T-cell (primary cell): ENCODE measurements at regions of chr21 and their contacts with region 1.

Region 1: GRCh38 chr21:29018540-29018939 is 609 bp downstream of the RWDD2B start:
- DNase-seq: no peak
- ATAC-seq: peak in 2 of 4 experiments; percentile 10 to 13
- H3K4me3 ChIP-seq: peak overlapping the region; percentile 87
- H3K4me3 Mint-ChIP-seq: peak overlapping the region; percentile 87 to 89 (median 88)
- H3K27ac ChIP-seq: peak overlapping the region; percentile 76
- H3K27ac Mint-ChIP-seq: peak overlapping the region; percentile 5 to 95
- H3K4me1 ChIP-seq: peaks cover 14 to 37% of the 10 kb centered on the region in 2 experiments
- H3K4me1 Mint-ChIP-seq: peaks cover 28 to 41% (median 39%) of the 10 kb centered on the region in 3 donors
- H3K27me3 ChIP-seq: no peaks in the 10 kb centered on the region
- H3K27me3 Mint-ChIP-seq: no peaks in the 10 kb centered on the region

Region 2: GRCh38 chr21:28992526-28993292 is 25.8 kb before region 1 on chr21 and contains the start of gene LTN1:
- CTCF ChIA-PET with region 1: interaction called, 5 to 16 read pairs
- POLR2A ChIA-PET with region 1: interaction called in 1 of 2 experiments, 13 read pairs
- DNase-seq: peak; percentile 96 to 99 (median 98)
- ATAC-seq: peak; percentile 94 to 98 (median 98)
- H3K4me3 ChIP-seq: peak within 1 kb of the TSS; percentile 92 to 98
- H3K4me3 Mint-ChIP-seq: peak within 1 kb of the TSS; percentile 96 to 97 (median 96)
- H3K27ac ChIP-seq: peak within 1 kb of the TSS; percentile 90
- H3K27ac Mint-ChIP-seq: peak within 1 kb of the TSS; percentile 96 to 99
- H3K4me1 ChIP-seq: peaks cover 9 to 20% of the 10 kb centered on the region in 2 experiments
- H3K4me1 Mint-ChIP-seq: peaks cover 28 to 48% (median 40%) of the 10 kb centered on the region in 3 donors
- H3K27me3 ChIP-seq: no peaks in the 10 kb centered on the region
- H3K27me3 Mint-ChIP-seq: no peaks in the 10 kb centered on the region
- total RNA-seq, gene LTN1: 23.4 to 34.1 (median 25.2) TPM

Region 3: GRCh38 chr21:29002442-29003144 is 15.9 kb before region 1 on chr21:
- CTCF ChIA-PET with region 1: interaction called, 5 to 11 read pairs
- POLR2A ChIA-PET with region 1: interaction called, 25 to 106 read pairs
- DNase-seq: peak; percentile 81 to 98 (median 96)
- ATAC-seq: peak; percentile 100
- H3K4me3 ChIP-seq: peak overlapping the region; percentile 71 to 90
- H3K4me3 Mint-ChIP-seq: peak overlapping the region; percentile 87 to 91 (median 90)
- H3K27ac ChIP-seq: peak overlapping the region; percentile 95
- H3K27ac Mint-ChIP-seq: peak overlapping the region; percentile 96 to 99
- H3K4me1 ChIP-seq: peaks cover 6 to 13% of the 10 kb centered on the region in 2 experiments
- H3K4me1 Mint-ChIP-seq: peaks cover 6 to 16% (median 14%) of the 10 kb centered on the region in 3 donors
- H3K27me3 ChIP-seq: no peaks in the 10 kb centered on the region
- H3K27me3 Mint-ChIP-seq: no peaks in the 10 kb centered on the region

Region 4: DNA sequence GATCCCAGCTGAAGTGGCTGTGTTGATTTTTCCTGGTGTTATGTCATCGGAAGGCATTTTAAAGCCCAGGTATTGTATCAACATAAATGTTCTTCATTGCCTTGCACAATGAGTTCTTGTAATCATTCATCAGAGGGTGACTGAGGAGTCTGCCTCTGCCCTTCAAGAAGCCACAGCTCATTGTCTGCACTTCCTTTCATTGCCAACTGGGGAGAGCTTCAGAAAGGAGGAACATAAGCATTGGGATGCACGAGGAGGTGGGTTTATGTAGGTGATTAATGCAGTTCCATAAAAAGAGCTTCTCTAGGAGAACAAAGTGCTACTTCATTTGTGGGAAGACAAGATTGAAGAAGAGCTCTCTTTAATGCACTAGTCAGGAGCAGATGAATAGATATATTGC is 404.6 kb after region 1 on chr21:
- CTCF ChIA-PET with region 1: no interaction called
- POLR2A ChIA-PET with region 1: no interaction called
- DNase-seq: no peak
- ATAC-seq: no peak
- H3K4me3 ChIP-seq: no peak overlapping the region
- H3K4me3 Mint-ChIP-seq: no peak overlapping the region
- H3K27ac ChIP-seq: no peak overlapping the region
- H3K27ac Mint-ChIP-seq: no peak overlapping the region
- H3K4me1 ChIP-seq: no peaks in the 10 kb centered on the region
- H3K4me1 Mint-ChIP-seq: peaks cover 7 to 10% (median 8%) of the 10 kb centered on the region in 3 donors
- H3K27me3 ChIP-seq: no peaks in the 10 kb centered on the region
- H3K27me3 Mint-ChIP-seq: no peaks in the 10 kb centered on the region